H1 (cell line): ENCODE measurements at regions of chr1 and their contacts with region 1.

Region 1: GRCh38 chr1:212608209-212608955 is at the start of gene ATF3:
- DNase-seq: peak; percentile 96 to 99
- H3K4me3 ChIP-seq: peak within 1 kb of the TSS; percentile 51 to 96 (median 74)
- H3K27ac ChIP-seq: peak within 1 kb of the TSS; percentile 71; the same call in 1 of the 2 replicates
- H3K4me1 ChIP-seq: peaks cover 14 to 41% (median 26%) of the 10 kb centered on the region in 4 experiments
- H3K27me3 ChIP-seq: peaks cover 10 to 38% (median 27%) of the 10 kb centered on the region in 4 experiments; a peak in 6 of 7 replicates
- CTCF ChIP-seq: no peak
- EP300 ChIP-seq: no peak
- POLR2A ChIP-seq: peak; percentile 99
- RAD21 ChIP-seq: peak in 1 of 2 experiments; percentile 13; a peak in 1 of 4 replicates
- total RNA-seq, gene ATF3: 21.5 and 27.7 TPM in 2 replicates

Region 2: GRCh38 chr1:212147581-212148033 is 460.8 kb before region 1 on chr1:
- CTCF ChIA-PET with region 1: no interaction called
- POLR2A ChIA-PET with region 1: no interaction called
- DNase-seq: no peak
- H3K4me3 ChIP-seq: no peak overlapping the region
- H3K27ac ChIP-seq: no peak overlapping the region
- H3K4me1 ChIP-seq: peaks cover 0 to 4% (median 0%) of the 10 kb centered on the region in 4 experiments; a peak in 1 of 7 replicates
- H3K27me3 ChIP-seq: no peaks in the 10 kb centered on the region
- CTCF ChIP-seq: no peak
- EP300 ChIP-seq: no peak
- POLR2A ChIP-seq: no peak
- RAD21 ChIP-seq: no peak

Region 3: GRCh38 chr1:212237651-212238050 is 370.7 kb before region 1 on chr1:
- CTCF ChIA-PET with region 1: no interaction called
- POLR2A ChIA-PET with region 1: no interaction called
- DNase-seq: no peak
- H3K4me3 ChIP-seq: no peak overlapping the region
- H3K27ac ChIP-seq: no peak overlapping the region
- H3K4me1 ChIP-seq: no peaks in the 10 kb centered on the region
- H3K27me3 ChIP-seq: no peaks in the 10 kb centered on the region; a peak in 1 of 7 replicates
- CTCF ChIP-seq: no peak
- EP300 ChIP-seq: no peak
- POLR2A ChIP-seq: no peak
- RAD21 ChIP-seq: no peak

Region 4: DNA sequence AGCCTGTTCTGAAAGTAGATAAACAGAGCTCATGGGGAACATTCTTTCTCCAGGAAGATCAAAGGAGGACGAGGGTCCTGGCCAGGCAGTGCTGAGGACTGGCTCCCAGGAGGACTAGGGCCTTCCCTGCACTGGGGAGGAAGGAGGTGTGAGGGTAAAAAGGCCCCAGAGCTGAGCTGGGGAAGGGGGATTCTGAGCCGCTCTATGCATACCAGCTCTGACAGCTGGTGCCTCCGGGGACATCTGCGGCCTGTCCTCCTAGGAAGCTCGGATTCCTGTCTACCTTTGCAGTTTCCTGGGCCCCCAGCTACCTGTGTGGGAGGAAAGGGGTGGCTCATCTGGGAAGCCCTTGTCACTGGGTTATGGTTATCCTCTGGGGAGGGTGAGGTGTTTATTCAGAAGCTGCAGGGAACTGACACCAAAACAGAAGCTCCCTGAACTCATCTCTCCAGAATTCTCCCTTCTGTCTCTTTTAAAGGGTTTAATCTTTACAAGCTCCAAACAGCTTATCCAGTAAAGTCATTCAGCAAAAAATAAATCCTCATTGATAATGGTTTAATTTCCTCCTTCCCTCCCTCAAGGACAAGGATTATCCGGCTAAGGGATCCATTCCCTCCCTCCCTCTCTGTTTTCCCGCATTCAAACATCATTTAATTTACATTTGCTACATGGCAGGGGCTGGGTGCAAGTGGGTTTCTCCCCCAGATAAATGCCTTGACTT is 144.7 kb before region 1 on chr1:
- CTCF ChIA-PET with region 1: no interaction called
- POLR2A ChIA-PET with region 1: interaction called, 25 read pairs
- DNase-seq: no peak
- H3K4me3 ChIP-seq: no peak overlapping the region
- H3K27ac ChIP-seq: no peak overlapping the region
- H3K4me1 ChIP-seq: peaks cover 0 to 9% (median 1%) of the 10 kb centered on the region in 4 experiments; a peak in 2 of 7 replicates
- H3K27me3 ChIP-seq: no peaks in the 10 kb centered on the region
- CTCF ChIP-seq: no peak
- EP300 ChIP-seq: no peak
- POLR2A ChIP-seq: no peak
- RAD21 ChIP-seq: no peak

Region 5: GRCh38 chr1:212488397-212489283 is 119.7 kb before region 1 on chr1:
- CTCF ChIA-PET with region 1: no interaction called
- POLR2A ChIA-PET with region 1: interaction called, 10 read pairs
- DNase-seq: no peak
- H3K4me3 ChIP-seq: no peak overlapping the region
- H3K27ac ChIP-seq: no peak overlapping the region
- H3K4me1 ChIP-seq: peaks cover 0 to 6% (median 1%) of the 10 kb centered on the region in 4 experiments; a peak in 4 of 7 replicates
- H3K27me3 ChIP-seq: no peaks in the 10 kb centered on the region
- CTCF ChIP-seq: no peak
- EP300 ChIP-seq: no peak
- POLR2A ChIP-seq: no peak
- RAD21 ChIP-seq: no peak

Region 6: DNA sequence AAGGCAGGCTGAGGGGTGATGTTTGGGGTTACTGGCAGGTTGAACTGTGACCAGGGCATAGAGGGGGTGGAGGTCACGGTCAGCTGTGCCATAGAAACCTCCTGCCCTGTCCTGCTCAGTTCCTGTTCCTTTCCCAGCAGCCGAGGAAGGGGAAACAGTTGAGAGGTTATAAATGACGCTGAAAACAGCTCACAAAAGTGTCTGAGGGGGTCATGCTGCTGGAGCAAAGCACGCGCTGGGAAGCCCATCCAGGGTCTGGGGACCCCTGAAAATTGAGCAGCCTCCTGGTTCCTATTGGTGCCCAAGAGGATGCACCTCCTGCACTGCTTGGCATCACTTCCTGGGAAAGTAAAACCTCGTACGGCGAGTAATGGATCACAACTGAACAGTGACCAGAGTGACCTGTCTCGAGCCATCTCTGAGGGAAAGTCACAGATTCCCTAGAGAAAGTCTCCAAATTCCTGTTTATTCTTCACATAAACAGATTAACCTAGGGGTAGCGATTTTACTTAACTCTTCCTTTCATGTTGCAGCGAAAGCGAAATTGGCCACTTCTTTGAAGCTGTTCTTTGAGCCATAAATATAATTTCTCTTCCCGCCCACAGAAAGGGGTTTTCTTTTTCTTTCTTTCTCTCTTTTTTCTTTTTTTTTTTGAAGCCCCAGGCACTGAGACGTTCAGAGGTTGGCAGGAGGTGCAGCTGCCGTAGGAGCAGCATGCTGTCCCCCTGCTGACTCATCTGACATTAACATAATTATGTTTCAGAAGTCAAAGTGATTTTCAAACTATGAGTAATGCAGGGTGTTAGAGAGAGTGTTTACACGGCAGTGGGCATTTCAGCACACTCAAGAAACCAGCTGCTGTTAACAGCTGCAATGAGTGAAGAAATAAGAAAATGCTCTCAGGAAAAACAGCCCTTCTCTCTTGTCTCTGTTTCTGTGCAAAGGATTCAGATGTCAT is 41.6 kb before region 1 on chr1:
- CTCF ChIA-PET with region 1: interaction called, 3 read pairs
- POLR2A ChIA-PET with region 1: interaction called, 61 read pairs
- DNase-seq: no peak
- H3K4me3 ChIP-seq: no peak overlapping the region
- H3K27ac ChIP-seq: no peak overlapping the region
- H3K4me1 ChIP-seq: peaks cover 0 to 5% (median 0%) of the 10 kb centered on the region in 4 experiments; a peak in 1 of 7 replicates
- H3K27me3 ChIP-seq: no peaks in the 10 kb centered on the region
- CTCF ChIP-seq: no peak
- EP300 ChIP-seq: no peak
- POLR2A ChIP-seq: no peak
- RAD21 ChIP-seq: no peak

Region 7: DNA sequence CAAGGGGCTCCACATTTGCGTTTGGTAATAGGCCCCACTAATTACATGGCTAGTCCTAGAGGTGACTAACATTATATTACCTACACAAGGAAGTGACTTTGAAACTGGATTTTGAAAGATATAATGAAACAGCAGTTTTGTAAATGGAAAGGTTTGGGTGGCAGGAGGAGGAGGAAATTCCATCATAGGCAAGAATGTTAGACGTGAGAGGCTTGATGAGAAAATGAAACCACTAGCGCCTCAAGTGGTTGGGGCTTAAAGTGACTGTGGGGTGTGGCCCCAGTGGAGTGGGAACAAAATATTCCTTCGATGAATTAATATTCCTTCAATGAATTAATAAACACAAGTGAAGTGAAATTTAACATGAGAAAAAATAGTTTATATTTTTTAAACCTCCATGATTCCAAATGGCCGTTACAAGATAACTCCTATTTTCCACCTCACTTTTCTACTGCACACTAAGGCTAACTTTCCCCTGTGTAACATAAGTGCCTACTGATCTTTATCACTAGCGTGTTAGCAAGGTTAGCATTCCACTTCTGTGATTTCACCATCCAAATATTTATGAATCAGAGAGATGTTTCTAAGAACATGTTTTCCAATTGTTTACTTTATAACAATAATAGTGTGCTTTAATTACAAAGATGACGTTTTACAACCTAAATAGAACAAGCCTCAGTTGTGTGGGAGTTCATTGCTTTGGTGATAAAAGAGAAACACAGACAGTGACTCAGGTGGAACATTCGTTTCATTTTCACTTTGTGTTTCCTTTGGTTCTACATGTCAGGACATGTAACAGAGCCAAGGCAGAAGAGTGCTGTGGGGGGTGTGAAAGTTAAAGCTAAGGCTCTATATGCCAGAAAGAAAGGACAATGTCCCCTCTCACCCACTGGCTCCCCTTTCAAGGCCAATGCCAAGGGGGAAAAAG is 12.3 kb before region 1 on chr1:
- CTCF ChIA-PET with region 1: interaction called, 15 read pairs
- POLR2A ChIA-PET with region 1: interaction called, 88 read pairs
- DNase-seq: no peak
- H3K4me3 ChIP-seq: no peak overlapping the region
- H3K27ac ChIP-seq: peak overlapping the region; percentile 30; the same call in 1 of the 2 replicates
- H3K4me1 ChIP-seq: peaks cover 0 to 13% (median 3%) of the 10 kb centered on the region in 4 experiments; a peak in 6 of 7 replicates
- H3K27me3 ChIP-seq: no peaks in the 10 kb centered on the region; a peak in 1 of 7 replicates
- CTCF ChIP-seq: peak; percentile 57 to 67 (median 60)
- EP300 ChIP-seq: no peak
- POLR2A ChIP-seq: no peak
- RAD21 ChIP-seq: peak; percentile 50 to 59

Region 8: DNA sequence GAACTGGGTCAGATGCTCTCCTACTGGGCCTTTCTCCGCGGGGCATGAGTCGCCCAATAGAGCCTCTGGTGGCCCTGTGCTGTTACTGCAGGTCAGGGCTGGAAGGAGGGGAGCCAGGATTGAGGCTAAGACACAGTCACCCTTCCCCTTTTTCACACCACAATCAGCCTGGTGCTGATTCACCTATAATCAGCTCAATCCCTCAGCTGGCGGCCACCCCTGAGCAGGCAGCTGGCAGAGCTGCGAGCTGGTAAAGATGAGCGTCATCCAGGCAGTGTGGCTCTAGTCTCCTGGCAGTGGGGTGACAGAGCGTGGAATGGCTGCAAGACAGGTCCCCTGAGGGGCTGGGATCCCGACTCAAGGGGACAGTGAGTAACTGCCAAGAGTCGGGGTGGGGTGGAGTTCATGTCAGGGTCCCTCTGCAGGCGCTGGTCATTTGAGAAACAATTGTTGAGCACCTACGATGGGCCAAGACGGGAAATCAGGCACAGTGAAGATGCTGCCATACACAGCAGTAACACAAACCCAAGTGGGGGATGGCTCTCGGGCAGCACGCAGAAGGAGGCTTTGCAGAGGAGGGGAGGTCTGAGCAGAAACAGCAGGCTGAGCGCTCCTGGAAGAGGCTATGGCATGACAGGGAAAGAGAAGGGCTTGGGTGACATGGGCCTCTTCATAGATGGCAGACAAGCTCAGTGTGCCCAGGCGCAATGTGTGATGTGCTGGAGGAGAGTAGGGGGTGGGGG is 21.9 kb after region 1 on chr1:
- CTCF ChIA-PET with region 1: interaction called, 29 read pairs
- POLR2A ChIA-PET with region 1: interaction called, 15 read pairs
- DNase-seq: peak in 1 of 2 experiments; percentile 84
- H3K4me3 ChIP-seq: no peak overlapping the region
- H3K27ac ChIP-seq: no peak overlapping the region
- H3K4me1 ChIP-seq: peaks cover 0 to 10% (median 4%) of the 10 kb centered on the region in 4 experiments; a peak in 6 of 7 replicates
- H3K27me3 ChIP-seq: no peaks in the 10 kb centered on the region
- CTCF ChIP-seq: peak; percentile 74 to 94 (median 88)
- EP300 ChIP-seq: no peak
- POLR2A ChIP-seq: no peak
- RAD21 ChIP-seq: peak; percentile 59 to 70

Region 9: DNA sequence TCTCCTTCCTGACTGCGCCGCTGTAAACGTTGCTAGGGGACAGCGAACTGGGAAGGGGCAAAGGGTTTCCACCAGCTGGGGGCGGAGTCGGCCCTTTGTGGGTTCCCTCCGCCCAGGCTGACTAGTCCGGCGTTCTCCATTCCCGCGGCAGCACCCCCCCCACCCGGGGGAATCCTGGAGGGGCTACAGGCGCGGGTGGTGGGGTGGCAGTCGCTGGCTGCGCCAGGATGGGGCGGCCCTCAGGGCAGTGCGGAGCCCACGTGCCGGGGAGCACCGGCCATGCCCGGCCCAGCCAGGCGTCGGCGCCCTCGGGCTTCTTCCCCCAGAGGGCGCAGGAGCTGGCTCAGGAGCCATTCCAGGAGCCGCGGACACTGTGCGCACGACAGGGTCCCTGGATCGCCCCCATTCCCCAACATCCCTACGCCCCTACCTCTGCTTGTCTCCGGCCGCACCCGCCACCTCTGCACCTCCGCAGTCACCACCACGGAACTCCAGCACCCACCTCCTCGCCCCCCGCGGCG is 90.8 kb after region 1 on chr1:
- CTCF ChIA-PET with region 1: no interaction called
- POLR2A ChIA-PET with region 1: interaction called, 18 read pairs
- DNase-seq: peak; percentile 33 to 84
- H3K4me3 ChIP-seq: peak overlapping the region; percentile 29 to 69 (median 34)
- H3K27ac ChIP-seq: no peak overlapping the region
- H3K4me1 ChIP-seq: peaks cover 5 to 8% (median 7%) of the 10 kb centered on the region in 4 experiments; a peak in 6 of 7 replicates
- H3K27me3 ChIP-seq: peaks cover 31 to 58% (median 47%) of the 10 kb centered on the region in 4 experiments
- CTCF ChIP-seq: peak; percentile 63 to 86 (median 66)
- EP300 ChIP-seq: no peak
- POLR2A ChIP-seq: no peak
- RAD21 ChIP-seq: peak; percentile 47 to 60

Region 10: DNA sequence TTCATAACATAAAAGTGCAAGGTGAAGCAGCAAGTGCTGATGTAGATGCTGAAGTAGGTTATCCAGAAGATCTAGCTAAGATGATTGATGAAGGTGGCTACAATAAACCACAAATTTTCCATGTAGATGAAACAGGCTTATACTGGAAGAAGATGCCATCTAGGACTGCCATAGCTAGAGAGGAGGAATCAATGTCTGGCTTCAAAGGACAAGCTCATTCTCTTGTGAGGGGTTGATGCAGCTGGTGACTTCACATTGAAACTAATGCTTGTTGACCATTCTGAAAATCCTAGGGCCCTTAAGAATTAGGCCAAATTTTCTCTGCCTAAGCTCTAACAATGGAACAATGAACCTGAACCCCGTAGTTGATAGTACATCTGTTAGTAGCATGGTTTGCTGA is 283.7 kb after region 1 on chr1:
- CTCF ChIA-PET with region 1: no interaction called
- POLR2A ChIA-PET with region 1: no interaction called
- DNase-seq: no peak
- H3K4me3 ChIP-seq: no peak overlapping the region
- H3K27ac ChIP-seq: no peak overlapping the region; the same call in 1 of the 2 replicates
- H3K4me1 ChIP-seq: no peaks in the 10 kb centered on the region
- H3K27me3 ChIP-seq: no peaks in the 10 kb centered on the region
- CTCF ChIP-seq: no peak
- EP300 ChIP-seq: no peak
- POLR2A ChIP-seq: peak; percentile 15 to 67; a peak in 2 of 3 replicates
- RAD21 ChIP-seq: no peak